ENCODE measurements at regions of chr10 and their contacts with region 1.

Region 1: DNA sequence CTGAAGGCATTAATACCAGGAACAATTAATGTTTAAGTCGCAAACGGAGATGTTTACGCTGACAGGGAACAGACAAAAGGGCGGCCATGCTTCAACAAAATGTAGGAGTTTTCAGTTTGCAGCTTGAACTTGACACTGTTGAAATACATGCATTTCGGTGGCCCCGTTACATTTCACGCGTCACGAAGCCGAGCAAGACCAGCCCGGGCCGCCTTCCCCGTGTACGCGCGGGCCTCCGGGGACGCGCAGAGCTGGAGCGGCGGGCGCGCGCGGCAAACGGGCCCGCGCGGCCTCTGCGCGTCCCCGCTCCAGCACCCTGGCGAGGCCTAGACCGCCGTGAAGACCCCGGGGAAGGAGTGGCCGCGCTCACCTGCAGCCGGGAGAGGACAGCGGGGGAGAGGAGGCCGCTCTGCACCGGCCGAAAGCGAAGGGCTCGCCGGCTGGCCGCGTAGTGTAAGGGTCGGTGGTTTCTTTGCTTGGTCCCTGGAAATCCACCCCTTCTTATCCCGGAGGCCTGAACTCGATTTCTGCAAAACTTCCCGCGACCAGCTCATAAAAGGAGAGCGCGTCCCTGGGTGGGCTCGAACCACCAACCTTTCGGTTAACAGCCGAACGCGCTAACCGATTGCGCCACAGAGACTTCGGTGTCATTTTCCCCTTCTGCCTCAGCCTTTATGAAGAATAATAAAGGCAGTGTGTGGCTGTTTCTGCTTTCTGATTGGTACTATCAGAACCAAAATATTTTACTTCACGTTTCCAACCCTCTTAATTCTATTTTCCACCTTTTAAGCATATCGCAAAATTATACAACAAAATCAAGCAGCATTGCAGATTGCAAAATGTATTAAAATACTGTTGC is 11.4 kb upstream of the EBLN1 start:
- DNase-seq: peak; percentile 92
- ATAC-seq: peak; percentile 80
- H3K4me3 Mint-ChIP-seq: peak overlapping the region; percentile 84
- H3K27ac Mint-ChIP-seq: peak overlapping the region; percentile 92
- H3K4me1 Mint-ChIP-seq: peaks cover 14% of the 10 kb centered on the region
- H3K27me3 Mint-ChIP-seq: peaks cover 7% of the 10 kb centered on the region
- CTCF ChIP-seq: no peak

Region 2: DNA sequence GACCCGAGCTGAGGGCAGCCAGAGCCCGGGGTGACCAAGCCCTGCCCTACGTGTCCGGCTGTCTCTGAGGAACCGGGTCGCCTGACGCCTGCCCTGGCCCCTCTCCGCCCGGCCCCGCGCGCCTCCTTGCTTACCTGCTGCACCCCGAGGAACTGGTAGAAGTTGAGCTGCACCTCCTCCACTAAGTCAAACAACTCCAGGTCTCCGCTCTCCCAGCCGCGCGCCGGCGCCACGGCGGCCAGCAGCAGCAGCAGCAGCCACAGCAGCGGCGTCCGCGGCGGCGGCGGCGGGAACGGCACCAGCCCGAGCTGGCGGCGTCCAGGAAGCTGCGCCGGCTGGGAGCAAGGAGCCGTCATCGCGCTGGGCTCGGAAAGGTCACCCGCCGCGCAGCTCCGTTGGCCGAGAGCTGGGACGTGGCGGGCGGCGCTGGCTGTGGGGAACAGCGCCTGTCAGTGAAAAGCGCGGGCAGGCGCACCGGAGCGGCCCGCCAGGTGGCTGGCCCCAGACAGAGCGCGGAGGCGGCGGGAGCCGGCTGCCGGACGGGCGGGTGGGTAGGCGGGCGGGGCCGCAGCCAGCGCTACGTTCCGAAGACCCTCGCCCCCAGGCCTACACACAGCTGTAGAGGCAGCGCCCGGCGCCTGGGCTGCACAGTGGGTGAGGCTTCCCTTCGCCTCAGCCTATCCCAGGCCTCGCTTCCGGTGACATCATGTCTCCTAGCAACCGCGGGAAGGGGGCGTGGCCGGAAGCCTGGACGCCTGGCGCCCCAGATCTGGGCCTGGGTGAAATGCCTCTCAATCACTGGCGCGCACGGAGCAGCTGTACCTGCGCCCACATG is 225.9 kb before region 1 on chr10 and contains the start of gene DNAJC1:
- CTCF ChIA-PET with region 1: no interaction called
- POLR2A ChIA-PET with region 1: interaction called, 4 read pairs
- intact Hi-C with region 1: loop called (anchors 10 kb)
- DNase-seq: peak; percentile 99
- ATAC-seq: peak; percentile 93
- H3K4me3 Mint-ChIP-seq: peak within 1 kb of the TSS; percentile 89
- H3K27ac Mint-ChIP-seq: peak within 1 kb of the TSS; percentile 92
- H3K4me1 Mint-ChIP-seq: peaks cover 27% of the 10 kb centered on the region
- H3K27me3 Mint-ChIP-seq: peaks cover 4% of the 10 kb centered on the region
- CTCF ChIP-seq: no peak
- total RNA-seq, gene DNAJC1: 19.3 to 23.7 TPM

Region 3: DNA sequence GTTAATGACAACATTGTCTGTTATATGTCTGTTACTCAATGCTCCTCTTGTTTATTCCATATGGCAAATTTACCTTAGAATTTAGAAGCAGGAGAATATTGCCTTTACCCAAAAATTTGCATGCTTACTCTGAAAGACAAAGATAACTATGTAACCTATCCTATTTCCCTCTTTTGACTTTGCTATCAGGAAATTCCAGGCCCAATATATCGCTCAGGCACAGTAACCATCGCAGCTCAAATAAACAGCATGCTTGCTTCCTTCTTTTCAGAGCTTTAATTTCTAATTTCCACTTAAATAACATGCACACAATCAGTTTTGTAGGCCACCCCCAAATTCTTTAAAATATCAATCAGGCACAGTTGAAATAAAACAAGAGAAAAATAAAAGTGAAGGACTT is 69.2 kb before region 1 on chr10:
- CTCF ChIA-PET with region 1: no interaction called
- POLR2A ChIA-PET with region 1: no interaction called
- intact Hi-C with region 1: no loop called
- DNase-seq: no peak
- ATAC-seq: no peak
- H3K4me3 Mint-ChIP-seq: no peak overlapping the region
- H3K27ac Mint-ChIP-seq: no peak overlapping the region
- H3K4me1 Mint-ChIP-seq: peaks cover 9% of the 10 kb centered on the region
- H3K27me3 Mint-ChIP-seq: no peaks in the 10 kb centered on the region
- CTCF ChIP-seq: no peak

Region 4: GRCh38 chr10:22245567-22245966 is 16.4 kb after region 1 on chr10:
- CTCF ChIA-PET with region 1: interaction called, 8 read pairs
- POLR2A ChIA-PET with region 1: interaction called, 4 read pairs
- intact Hi-C with region 1: loop called (anchors 2 kb)
- DNase-seq: no peak
- ATAC-seq: no peak
- H3K4me3 Mint-ChIP-seq: no peak overlapping the region
- H3K27ac Mint-ChIP-seq: peak overlapping the region; percentile 55
- H3K4me1 Mint-ChIP-seq: peaks cover 40% of the 10 kb centered on the region
- H3K27me3 Mint-ChIP-seq: peaks cover 3% of the 10 kb centered on the region
- CTCF ChIP-seq: no peak

Region 5: DNA sequence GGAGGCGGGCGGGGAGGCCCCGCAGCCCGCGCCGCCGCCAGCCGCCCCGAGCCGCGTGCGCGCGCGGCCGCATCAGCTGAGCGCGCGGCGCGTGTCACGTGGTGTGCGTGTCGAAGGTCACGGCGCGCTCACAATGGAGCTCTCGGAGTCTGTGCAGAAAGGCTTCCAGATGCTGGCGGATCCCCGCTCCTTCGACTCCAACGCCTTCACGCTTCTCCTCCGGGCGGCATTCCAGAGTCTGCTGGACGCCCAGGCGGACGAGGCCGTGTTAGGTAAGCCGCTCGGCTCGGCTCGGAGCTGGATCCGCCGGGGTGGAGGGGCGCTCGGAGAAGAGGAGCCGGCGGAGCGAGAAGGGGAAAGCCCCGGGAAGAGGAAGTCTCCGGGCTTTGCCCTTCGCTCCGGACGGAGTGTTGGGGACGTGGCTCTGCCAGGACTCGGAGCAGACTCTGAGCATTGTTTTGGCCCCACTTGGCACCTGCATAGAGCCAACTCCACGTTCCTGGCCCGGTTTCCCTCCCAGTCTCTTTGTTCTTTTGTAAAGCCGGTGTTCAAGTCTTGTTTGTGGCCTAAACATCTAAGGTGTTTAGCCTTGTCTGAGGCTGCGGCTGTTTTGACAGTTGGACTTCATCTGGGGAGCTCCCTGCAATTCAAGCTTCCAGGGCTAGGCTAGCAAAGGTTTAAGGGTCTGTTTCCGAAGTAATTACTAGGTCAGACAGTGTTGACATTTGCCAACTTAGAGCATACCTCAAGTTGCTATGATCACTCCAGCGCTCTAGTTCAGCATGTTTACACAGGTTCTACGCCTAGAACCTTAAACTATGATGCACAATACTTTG is 87.3 kb after region 1 on chr10 and contains the start of gene COMMD3:
- CTCF ChIA-PET with region 1: interaction called, 7 read pairs
- POLR2A ChIA-PET with region 1: interaction called, 5 read pairs
- intact Hi-C with region 1: loop called (anchors 5 kb)
- DNase-seq: peak; percentile 82
- ATAC-seq: peak; percentile 67
- H3K4me3 Mint-ChIP-seq: peak within 1 kb of the TSS; percentile 88
- H3K27ac Mint-ChIP-seq: peak within 1 kb of the TSS; percentile 91
- H3K4me1 Mint-ChIP-seq: peaks cover 32% of the 10 kb centered on the region
- H3K27me3 Mint-ChIP-seq: peaks cover 17% of the 10 kb centered on the region
- CTCF ChIP-seq: no peak
- total RNA-seq, gene COMMD3: 64.7 to 68.7 TPM

Region 6: GRCh38 chr10:22436884-22437619 is 207.9 kb after region 1 on chr10:
- CTCF ChIA-PET with region 1: no interaction called
- POLR2A ChIA-PET with region 1: interaction called, 13 read pairs
- intact Hi-C with region 1: no loop called
- DNase-seq: peak; percentile 89
- ATAC-seq: peak; percentile 86
- H3K4me3 Mint-ChIP-seq: peak overlapping the region; percentile 88
- H3K27ac Mint-ChIP-seq: peak overlapping the region; percentile 95
- H3K4me1 Mint-ChIP-seq: peaks cover 47% of the 10 kb centered on the region
- H3K27me3 Mint-ChIP-seq: no peaks in the 10 kb centered on the region
- CTCF ChIP-seq: no peak